Tibial artery (tissue), 4 donors: ENCODE measurements at regions of chr2 and their contacts with region 1.

Region 1: GRCh38 chr2:1546023-1546591 is 132.8 kb downstream of the TPO start:
- DNase-seq: no peak
- H3K4me3 ChIP-seq: no peak overlapping the region
- H3K27ac ChIP-seq: no peak overlapping the region
- H3K4me1 ChIP-seq: peaks cover 0 to 11% (median 6%) of the 10 kb centered on the region in 4 donors
- H3K27me3 ChIP-seq: peaks cover 0 to 9% of the 10 kb centered on the region in 2 donors
- CTCF ChIP-seq: peak; percentile 68 to 77

Region 2: GRCh38 chr2:854460-854859 is 691.6 kb before region 1 on chr2:
- intact Hi-C with region 1: loop called (anchors 10 kb)
- DNase-seq: no peak
- H3K4me3 ChIP-seq: no peak overlapping the region
- H3K27ac ChIP-seq: no peak overlapping the region
- H3K4me1 ChIP-seq: no peaks in the 10 kb centered on the region
- H3K27me3 ChIP-seq: peaks cover 0 to 5% of the 10 kb centered on the region in 2 donors
- CTCF ChIP-seq: peak; percentile 29

Region 3: GRCh38 chr2:990970-991369 is 555.1 kb before region 1 on chr2:
- intact Hi-C with region 1: no loop called
- DNase-seq: no peak
- H3K4me3 ChIP-seq: no peak overlapping the region
- H3K27ac ChIP-seq: no peak overlapping the region
- H3K4me1 ChIP-seq: no peaks in the 10 kb centered on the region
- H3K27me3 ChIP-seq: no peaks in the 10 kb centered on the region
- CTCF ChIP-seq: no peak

Region 4: GRCh38 chr2:1421726-1422125 is 124.4 kb before region 1 on chr2:
- intact Hi-C with region 1: no loop called
- DNase-seq: no peak
- H3K4me3 ChIP-seq: no peak overlapping the region
- H3K27ac ChIP-seq: no peak overlapping the region
- H3K4me1 ChIP-seq: no peaks in the 10 kb centered on the region
- H3K27me3 ChIP-seq: no peaks in the 10 kb centered on the region
- CTCF ChIP-seq: no peak

Region 5: DNA sequence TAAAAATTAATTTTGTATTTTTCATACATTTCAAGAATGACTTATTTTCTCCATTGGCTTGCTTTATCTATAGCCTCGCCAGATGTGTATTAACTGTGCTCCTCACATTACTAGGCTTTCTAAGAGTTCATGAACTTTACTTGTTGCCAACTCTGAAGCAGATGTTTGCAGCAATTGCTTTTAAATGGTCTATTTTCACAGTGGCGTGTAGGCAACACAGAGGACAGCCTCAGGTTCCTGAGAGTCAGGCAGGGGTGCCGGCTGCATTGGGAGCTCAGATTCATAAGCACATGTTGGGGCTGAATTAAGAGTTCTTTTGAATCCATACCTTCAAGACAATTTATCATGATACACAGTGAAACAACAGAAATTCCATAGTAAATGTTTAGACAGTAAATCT is 377.4 kb after region 1 on chr2:
- intact Hi-C with region 1: no loop called
- DNase-seq: no peak
- H3K4me3 ChIP-seq: no peak overlapping the region
- H3K27ac ChIP-seq: no peak overlapping the region
- H3K4me1 ChIP-seq: no peaks in the 10 kb centered on the region
- H3K27me3 ChIP-seq: peaks cover 0 to 1% of the 10 kb centered on the region in 2 donors
- CTCF ChIP-seq: no peak